ENCODE measurements at regions of chr1 and their contacts with region 1.

Region 1: DNA sequence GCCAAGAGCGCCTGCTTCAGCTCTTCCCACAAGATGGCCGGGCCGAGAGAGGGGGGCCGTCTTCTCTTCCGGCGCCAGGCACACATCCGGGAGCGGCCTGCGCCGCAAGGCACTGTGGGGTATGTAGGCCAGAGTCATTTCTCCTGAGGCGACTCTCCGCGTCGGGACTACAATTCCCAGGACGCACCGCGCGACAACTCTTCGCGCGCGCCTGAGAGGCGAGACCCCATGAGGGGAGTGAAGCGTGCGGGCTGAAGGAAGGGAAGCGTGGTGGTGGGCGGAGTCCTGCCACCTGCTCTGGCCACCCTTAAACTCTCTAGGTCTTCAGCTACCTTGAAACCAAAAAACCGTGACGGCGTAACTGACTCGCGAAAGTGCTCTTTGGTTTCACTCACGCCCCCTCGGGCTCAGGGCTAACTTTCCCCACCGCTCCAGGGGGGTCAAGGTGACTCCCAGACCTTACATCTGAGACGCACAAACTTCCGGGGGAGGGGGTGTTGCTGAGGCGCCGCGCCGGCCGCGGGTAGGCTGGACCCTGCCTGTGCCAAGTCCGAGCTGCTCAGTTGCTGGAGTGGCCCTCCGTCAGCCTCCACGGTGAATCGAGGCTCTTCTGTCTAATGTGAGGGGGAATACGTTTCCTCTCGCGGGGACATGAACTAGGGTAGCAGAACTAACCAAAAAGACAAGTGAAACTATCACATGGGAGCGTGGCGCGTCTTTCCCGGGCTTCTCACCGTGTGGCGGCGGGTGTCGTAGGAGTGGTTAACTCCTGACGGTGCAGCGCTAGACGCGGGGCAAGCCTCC is at the start of gene SERBP1:
- DNase-seq: peak; percentile 96
- ATAC-seq: peak; percentile 95
- H3K4me3 ChIP-seq: peak within 1 kb of the TSS; percentile 74 to 96 (median 77)
- H3K27ac ChIP-seq: peak within 1 kb of the TSS; percentile 93
- H3K4me1 ChIP-seq: peaks cover 31% of the 10 kb centered on the region
- H3K27me3 ChIP-seq: no peaks in the 10 kb centered on the region; a peak in 1 of 5 replicates
- CTCF ChIP-seq: no peak
- EP300 ChIP-seq: no peak
- POLR2A ChIP-seq: peak; percentile 79 to 86
- RAD21 ChIP-seq: no peak
- total RNA-seq, gene SERBP1: 281 and 464 TPM in 2 replicates

Region 2: DNA sequence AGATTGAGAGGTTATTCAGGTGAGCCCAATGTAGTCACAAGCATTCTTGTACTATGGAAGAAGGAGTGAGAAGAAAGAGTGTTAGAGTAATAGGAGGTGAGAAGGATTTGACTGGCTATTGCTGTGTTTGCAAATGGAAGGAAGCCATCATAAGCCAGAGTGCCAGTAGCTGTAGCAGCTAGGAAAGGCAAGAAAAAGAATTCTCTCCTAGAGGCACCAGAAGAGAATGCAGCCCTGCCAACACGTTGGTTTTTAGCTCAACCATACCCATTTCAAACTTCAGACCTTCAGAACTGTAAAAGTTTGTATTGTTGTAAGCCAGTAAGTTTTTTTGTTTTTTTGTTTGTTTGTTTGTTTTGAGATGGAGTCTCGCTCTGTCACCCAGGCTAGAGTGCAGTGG is 131.8 kb before region 1 on chr1:
- CTCF ChIA-PET with region 1: no interaction called
- POLR2A ChIA-PET with region 1: no interaction called
- in situ Hi-C with region 1: no loop called
- intact Hi-C with region 1: no loop called
- DNase-seq: no peak
- ATAC-seq: peak; percentile 39; the same call in 1 of the 3 replicates
- H3K4me3 ChIP-seq: no peak overlapping the region
- H3K27ac ChIP-seq: no peak overlapping the region
- H3K4me1 ChIP-seq: no peaks in the 10 kb centered on the region
- H3K27me3 ChIP-seq: no peaks in the 10 kb centered on the region; a peak in 1 of 5 replicates
- CTCF ChIP-seq: no peak
- EP300 ChIP-seq: no peak
- POLR2A ChIP-seq: no peak
- RAD21 ChIP-seq: no peak

Region 3: GRCh38 chr1:67404212-67404620 is 26.3 kb before region 1 on chr1:
- CTCF ChIA-PET with region 1: no interaction called
- POLR2A ChIA-PET with region 1: interaction called, 15 read pairs
- in situ Hi-C with region 1: no loop called
- intact Hi-C with region 1: no loop called
- DNase-seq: no peak
- ATAC-seq: no peak
- H3K4me3 ChIP-seq: no peak overlapping the region
- H3K27ac ChIP-seq: no peak overlapping the region
- H3K4me1 ChIP-seq: no peaks in the 10 kb centered on the region
- H3K27me3 ChIP-seq: no peaks in the 10 kb centered on the region
- CTCF ChIP-seq: no peak
- EP300 ChIP-seq: no peak
- POLR2A ChIP-seq: no peak
- RAD21 ChIP-seq: no peak

Region 4: DNA sequence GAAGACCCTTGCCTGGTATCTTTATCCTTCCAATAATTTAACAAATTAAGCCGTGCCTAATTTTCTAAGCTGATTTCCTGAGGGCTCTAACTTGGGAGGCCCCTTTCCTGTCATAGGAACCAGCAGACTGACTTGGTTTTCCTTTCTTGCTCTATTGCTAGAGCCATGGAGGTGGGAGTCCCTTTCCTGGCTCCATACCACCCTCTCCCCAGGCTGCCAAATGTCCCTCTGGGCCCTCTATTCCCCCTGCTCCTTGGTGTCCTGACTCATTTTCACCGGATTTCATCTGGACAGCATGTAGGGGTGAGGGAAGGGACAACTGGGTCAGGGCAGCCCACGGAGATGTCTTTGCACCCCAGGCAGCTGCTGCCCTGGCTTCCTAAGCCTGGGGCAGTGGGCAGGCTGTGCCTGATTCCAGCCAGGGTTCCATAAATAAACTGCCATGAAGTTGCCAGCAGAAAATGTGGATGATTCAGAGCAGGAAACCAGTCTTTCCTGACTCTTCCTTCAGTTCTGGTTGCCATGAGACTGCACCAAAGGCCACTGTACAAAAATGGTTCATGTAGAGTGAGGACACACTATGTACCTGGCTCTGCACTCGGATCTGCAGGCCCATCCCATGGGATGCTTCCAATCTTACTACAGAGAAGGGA is 37.6 kb after region 1 on chr1:
- CTCF ChIA-PET with region 1: no interaction called
- POLR2A ChIA-PET with region 1: no interaction called
- in situ Hi-C with region 1: no loop called
- intact Hi-C with region 1: loop called (anchors 1 kb)
- DNase-seq: no peak
- ATAC-seq: no peak
- H3K4me3 ChIP-seq: no peak overlapping the region
- H3K27ac ChIP-seq: no peak overlapping the region
- H3K4me1 ChIP-seq: no peaks in the 10 kb centered on the region
- H3K27me3 ChIP-seq: peaks cover 0 to 15% of the 10 kb centered on the region in 2 experiments; a peak in 2 of 5 replicates
- CTCF ChIP-seq: no peak
- EP300 ChIP-seq: no peak
- POLR2A ChIP-seq: no peak
- RAD21 ChIP-seq: no peak

Region 5: GRCh38 chr1:67489643-67490042 is 59.1 kb after region 1 on chr1:
- CTCF ChIA-PET with region 1: no interaction called
- POLR2A ChIA-PET with region 1: no interaction called
- in situ Hi-C with region 1: no loop called
- intact Hi-C with region 1: loop called (anchors 5 kb)
- DNase-seq: peak; percentile 36
- ATAC-seq: peak; percentile 96
- H3K4me3 ChIP-seq: no peak overlapping the region
- H3K27ac ChIP-seq: no peak overlapping the region
- H3K4me1 ChIP-seq: no peaks in the 10 kb centered on the region
- H3K27me3 ChIP-seq: no peaks in the 10 kb centered on the region; a peak in 1 of 5 replicates
- CTCF ChIP-seq: peak; percentile 63
- EP300 ChIP-seq: no peak
- POLR2A ChIP-seq: no peak
- RAD21 ChIP-seq: no peak

Region 6: DNA sequence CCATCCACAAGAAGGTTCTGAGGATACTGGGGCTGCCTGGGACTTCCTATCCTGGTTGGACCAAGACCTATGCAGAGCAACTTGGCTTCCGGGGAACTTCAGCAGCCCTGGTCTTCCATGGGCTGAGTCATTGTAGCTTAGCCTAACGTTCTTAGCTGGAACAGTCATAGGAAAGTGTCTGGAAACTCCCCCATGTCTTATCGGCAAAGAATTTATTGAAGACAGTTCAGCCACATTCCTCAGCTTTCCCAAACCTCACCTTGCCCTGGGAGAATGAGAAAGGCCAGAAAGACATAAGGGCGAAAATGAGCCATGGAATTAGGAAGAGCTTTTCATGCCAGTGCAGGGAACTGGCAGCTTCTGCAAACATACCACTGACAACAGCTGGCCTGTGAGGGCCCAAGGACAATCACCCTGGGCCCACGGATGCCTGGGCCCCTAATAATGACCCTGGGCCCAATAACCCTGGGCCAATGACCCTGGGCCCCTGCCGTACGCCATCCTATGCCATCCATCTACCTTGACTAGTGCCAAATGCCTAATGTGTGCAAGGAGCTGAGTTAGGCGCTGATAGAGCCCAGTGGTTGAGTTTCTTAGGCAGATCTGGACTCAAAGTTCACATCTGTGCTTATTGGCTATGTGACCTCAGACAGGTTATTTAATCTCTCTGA is 140.1 kb after region 1 on chr1:
- CTCF ChIA-PET with region 1: no interaction called
- POLR2A ChIA-PET with region 1: no interaction called
- in situ Hi-C with region 1: no loop called
- intact Hi-C with region 1: no loop called
- DNase-seq: no peak
- ATAC-seq: peak; percentile 18; the same call in 2 of the 3 replicates
- H3K4me3 ChIP-seq: no peak overlapping the region
- H3K27ac ChIP-seq: no peak overlapping the region
- H3K4me1 ChIP-seq: peaks cover 60% of the 10 kb centered on the region
- H3K27me3 ChIP-seq: no peaks in the 10 kb centered on the region; a peak in 2 of 5 replicates
- CTCF ChIP-seq: no peak
- EP300 ChIP-seq: no peak
- POLR2A ChIP-seq: no peak
- RAD21 ChIP-seq: no peak